SK-N-SH (cell line): ENCODE measurements at regions of chr2 and their contacts with region 1.

Region 1: GRCh38 chr2:9555297-9556141 is at the start of gene ADAM17:
- DNase-seq: peak; percentile 99
- H3K4me3 ChIP-seq: peak within 1 kb of the TSS; percentile 96 to 97
- H3K27ac ChIP-seq: peak within 1 kb of the TSS; percentile 98 to 99
- H3K4me1 ChIP-seq: peaks cover 13 to 23% of the 10 kb centered on the region in 2 experiments; a peak in 3 of 4 replicates
- H3K27me3 ChIP-seq: no peaks in the 10 kb centered on the region
- CTCF ChIP-seq: peak; percentile 55
- EP300 ChIP-seq: peak; percentile 27 to 44; a peak in 3 of 4 replicates
- RAD21 ChIP-seq: no peak; the same call in none of the 2 replicates
- polyA plus RNA-seq, gene ADAM17: 12.8 and 17.1 TPM in 2 replicates

Region 2: DNA sequence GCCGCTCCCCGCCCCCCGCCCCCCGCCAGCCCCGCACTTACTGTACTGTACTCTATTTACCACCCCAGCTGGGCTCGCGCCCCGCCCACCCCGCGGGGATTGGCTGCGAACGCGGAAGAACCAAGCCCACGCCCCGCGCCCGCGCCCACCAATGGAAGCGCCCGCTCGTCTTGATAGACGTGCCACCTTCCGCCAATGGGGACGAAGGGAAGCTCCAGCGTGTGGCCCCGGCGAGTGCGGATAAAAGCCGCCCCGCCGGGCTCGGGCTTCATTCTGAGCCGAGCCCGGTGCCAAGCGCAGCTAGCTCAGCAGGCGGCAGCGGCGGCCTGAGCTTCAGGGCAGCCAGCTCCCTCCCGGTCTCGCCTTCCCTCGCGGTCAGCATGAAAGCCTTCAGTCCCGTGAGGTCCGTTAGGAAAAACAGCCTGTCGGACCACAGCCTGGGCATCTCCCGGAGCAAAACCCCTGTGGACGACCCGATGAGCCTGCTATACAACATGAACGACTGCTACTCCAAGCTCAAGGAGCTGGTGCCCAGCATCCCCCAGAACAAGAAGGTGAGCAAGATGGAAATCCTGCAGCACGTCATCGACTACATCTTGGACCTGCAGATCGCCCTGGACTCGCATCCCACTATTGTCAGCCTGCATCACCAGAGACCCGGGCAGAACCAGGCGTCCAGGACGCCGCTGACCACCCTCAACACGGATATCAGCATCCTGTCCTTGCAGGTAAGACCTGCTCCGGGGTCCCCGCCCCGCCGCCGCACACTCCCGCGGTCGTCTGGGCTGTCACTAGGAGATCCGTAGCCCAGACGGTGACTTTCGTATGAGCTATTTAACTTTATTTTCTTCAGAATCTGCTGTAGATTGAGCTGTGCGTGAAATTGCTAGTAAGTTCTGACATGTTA is 873.5 kb before region 1 on chr2 and contains the start of gene ID2:
- CTCF ChIA-PET with region 1: no interaction called
- POLR2A ChIA-PET with region 1: no interaction called
- DNase-seq: peak; percentile 98
- H3K4me3 ChIP-seq: peak within 1 kb of the TSS; percentile 98 to 100
- H3K27ac ChIP-seq: peak within 1 kb of the TSS; percentile 97 to 99
- H3K4me1 ChIP-seq: peaks cover 12 to 48% of the 10 kb centered on the region in 2 experiments
- H3K27me3 ChIP-seq: no peaks in the 10 kb centered on the region
- CTCF ChIP-seq: no peak
- EP300 ChIP-seq: peak in 1 of 2 experiments; percentile 33; a peak in 1 of 4 replicates
- RAD21 ChIP-seq: peak; percentile 27; the same call in 1 of the 2 replicates
- polyA plus RNA-seq, gene ID2: 385 and 459 TPM in 2 replicates

Region 3: GRCh38 chr2:9112079-9112721 is 443.3 kb before region 1 on chr2:
- CTCF ChIA-PET with region 1: no interaction called
- POLR2A ChIA-PET with region 1: no interaction called
- DNase-seq: peak; percentile 58
- H3K4me3 ChIP-seq: no peak overlapping the region
- H3K27ac ChIP-seq: peak overlapping the region in 1 of 2 experiments; percentile 81; a peak in 2 of 4 replicates
- H3K4me1 ChIP-seq: peaks cover 18 to 22% of the 10 kb centered on the region in 2 experiments; a peak in 3 of 4 replicates
- H3K27me3 ChIP-seq: no peaks in the 10 kb centered on the region
- CTCF ChIP-seq: no peak
- EP300 ChIP-seq: peak in 1 of 2 experiments; percentile 94; a peak in 2 of 4 replicates
- RAD21 ChIP-seq: no peak

Region 4: GRCh38 chr2:9565436-9566153 is 10.1 kb after region 1 on chr2:
- CTCF ChIA-PET with region 1: interaction called, 3 read pairs
- POLR2A ChIA-PET with region 1: interaction called, 13 read pairs
- DNase-seq: no peak
- H3K4me3 ChIP-seq: no peak overlapping the region
- H3K27ac ChIP-seq: peak overlapping the region; percentile 23 to 96; a peak in 3 of 4 replicates
- H3K4me1 ChIP-seq: peaks cover 0 to 13% of the 10 kb centered on the region in 2 experiments; a peak in 2 of 4 replicates
- H3K27me3 ChIP-seq: no peaks in the 10 kb centered on the region
- CTCF ChIP-seq: no peak
- EP300 ChIP-seq: no peak; a peak in 1 of 4 replicates
- RAD21 ChIP-seq: no peak

Region 5: DNA sequence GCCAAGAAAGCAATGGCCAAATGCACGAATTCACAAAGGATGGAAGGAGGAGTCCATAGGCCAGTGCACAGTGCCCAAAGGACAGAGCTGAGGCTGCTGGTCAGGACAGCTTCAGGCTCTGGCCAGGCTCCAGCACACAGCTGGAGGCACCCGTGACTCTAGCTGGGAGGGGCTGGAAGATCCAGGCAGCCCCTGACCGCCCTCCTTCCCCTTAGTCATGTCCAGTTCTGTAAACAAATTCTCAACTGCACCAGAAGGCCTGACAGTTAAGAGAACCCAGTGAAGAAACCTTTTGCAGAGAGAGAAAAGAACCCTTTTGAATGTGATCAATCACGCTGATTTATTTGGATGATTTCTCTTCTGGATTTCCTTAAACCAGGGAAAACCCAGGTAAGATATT is 83.0 kb after region 1 on chr2:
- CTCF ChIA-PET with region 1: interaction called, 14 read pairs
- POLR2A ChIA-PET with region 1: no interaction called
- DNase-seq: peak; percentile 60
- H3K4me3 ChIP-seq: no peak overlapping the region
- H3K27ac ChIP-seq: peak overlapping the region; percentile 5 to 50; a peak in 3 of 4 replicates
- H3K4me1 ChIP-seq: peaks cover 22% of the 10 kb centered on the region in 2 experiments; a peak in 3 of 4 replicates
- H3K27me3 ChIP-seq: no peaks in the 10 kb centered on the region
- CTCF ChIP-seq: no peak
- EP300 ChIP-seq: peak in 1 of 2 experiments; percentile 21; a peak in 1 of 4 replicates
- RAD21 ChIP-seq: no peak

Region 6: DNA sequence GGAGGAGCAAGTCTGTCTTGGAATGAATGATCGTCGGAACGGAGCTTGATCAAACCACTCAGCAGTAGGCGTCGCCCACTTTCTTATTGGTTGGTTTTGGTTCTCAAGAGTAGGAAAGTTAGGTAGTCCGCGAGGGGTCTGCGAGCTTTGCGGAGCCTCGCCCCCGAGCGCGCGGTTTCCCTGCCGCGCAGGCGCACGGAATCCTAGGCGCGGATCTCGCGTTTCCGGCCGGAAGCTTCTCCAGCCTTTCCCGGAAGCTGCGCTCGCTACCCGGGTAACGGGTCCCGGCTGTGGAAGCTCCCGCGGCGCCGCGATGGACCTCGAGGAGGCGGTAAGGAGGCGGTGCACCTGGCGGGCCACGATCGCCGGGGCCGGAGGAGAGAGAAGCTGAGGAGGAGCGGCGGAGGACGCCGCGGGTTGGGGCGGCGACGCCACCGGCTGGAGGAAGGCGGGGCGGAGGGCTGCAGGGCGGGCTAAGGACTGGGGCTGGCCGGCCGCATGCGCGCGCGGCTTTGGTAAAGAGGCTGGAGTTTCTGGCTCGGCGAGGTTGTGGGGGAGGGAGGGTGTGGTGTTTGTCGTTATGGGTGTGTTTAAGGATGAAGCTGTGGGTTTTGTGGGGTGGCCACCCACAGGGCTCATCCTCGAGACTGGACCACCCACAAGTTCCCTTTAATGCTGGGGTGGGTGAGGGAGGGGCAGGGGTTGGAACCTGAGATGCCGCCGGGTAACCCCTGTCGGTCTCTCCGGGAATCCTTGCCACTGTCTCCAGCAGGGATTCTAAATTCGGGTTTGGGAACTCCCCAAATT is 287.9 kb after region 1 on chr2 and contains the start of gene TAF1B:
- CTCF ChIA-PET with region 1: no interaction called
- POLR2A ChIA-PET with region 1: interaction called, 15 read pairs
- DNase-seq: peak; percentile 99
- H3K4me3 ChIP-seq: peak within 1 kb of the TSS; percentile 60 to 86
- H3K27ac ChIP-seq: peak within 1 kb of the TSS; percentile 89 to 95
- H3K4me1 ChIP-seq: peaks cover 15 to 20% of the 10 kb centered on the region in 2 experiments
- H3K27me3 ChIP-seq: no peaks in the 10 kb centered on the region
- CTCF ChIP-seq: peak; percentile 43
- EP300 ChIP-seq: no peak
- RAD21 ChIP-seq: no peak
- polyA plus RNA-seq, gene TAF1B: 7.8 and 8.3 TPM in 2 replicates